RWPE1 (cell line): ENCODE measurements at regions of chr11 and their contacts with region 1.

Region 1: GRCh38 chr11:59641156-59641555 is 25.6 kb upstream of the OSBP start:
- DNase-seq: no peak
- H3K27ac ChIP-seq: no peak overlapping the region
- CTCF ChIP-seq: no peak

Region 2: GRCh38 chr11:59368238-59369022 is 272.7 kb before region 1 on chr11:
- CTCF ChIA-PET with region 1: no interaction called
- POLR2A ChIA-PET with region 1: no interaction called
- DNase-seq: no peak
- H3K27ac ChIP-seq: no peak overlapping the region
- CTCF ChIP-seq: no peak

Region 3: DNA sequence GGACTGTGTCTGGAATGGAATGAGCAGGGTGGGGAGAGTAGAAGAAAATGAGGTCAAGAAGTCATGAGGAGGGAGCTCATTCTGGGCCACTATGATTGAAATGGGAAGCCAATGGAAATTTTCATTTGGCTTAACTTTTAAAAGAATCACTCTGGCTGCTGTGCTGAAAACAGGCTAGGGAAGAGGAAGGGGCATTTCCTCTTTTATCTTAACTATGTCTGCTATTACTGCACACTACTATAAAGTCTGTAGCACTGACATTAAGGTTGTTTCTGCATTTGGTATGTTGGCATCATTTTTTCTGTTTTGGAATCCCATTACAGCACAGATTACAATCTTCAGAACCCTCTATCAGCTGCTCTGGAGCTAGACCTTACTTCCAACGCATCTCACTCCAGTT is 19.5 kb after region 1 on chr11:
- CTCF ChIA-PET with region 1: no interaction called
- POLR2A ChIA-PET with region 1: interaction called, 14 read pairs
- DNase-seq: no peak
- H3K27ac ChIP-seq: no peak overlapping the region
- CTCF ChIP-seq: no peak